CD8-positive, alpha-beta T cell (primary cell): ENCODE measurements at regions of chr3 and their contacts with region 1.

Region 1: DNA sequence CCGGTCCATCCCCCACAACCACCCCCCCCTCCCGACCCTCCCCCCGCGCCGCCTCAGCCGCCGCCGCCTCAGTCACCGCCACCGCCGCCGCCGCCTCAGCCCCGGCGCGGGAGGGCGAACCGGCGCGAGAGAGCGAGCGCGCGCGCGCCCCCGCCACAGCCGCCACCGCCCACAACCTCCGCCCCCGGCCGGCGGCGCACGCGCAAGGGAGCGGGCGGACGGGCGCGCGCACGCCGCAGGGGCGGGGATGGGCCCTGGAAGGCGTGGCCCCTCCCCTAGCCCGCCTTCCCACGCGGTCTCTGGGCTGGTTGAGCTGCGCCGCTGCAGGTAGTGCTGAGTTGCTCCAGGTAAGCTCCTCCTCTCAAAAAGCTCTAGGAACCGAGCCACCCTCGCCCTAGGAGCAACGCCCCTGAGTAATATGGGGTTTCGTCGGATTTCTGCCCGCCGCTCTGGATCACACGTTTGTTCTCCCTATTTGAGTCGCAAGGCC is at the start of gene TMCC1:
- DNase-seq: peak; percentile 72 to 96 (median 90)
- ATAC-seq: peak; percentile 94
- H3K4me3 ChIP-seq: peak within 1 kb of the TSS; percentile 91 to 97
- H3K4me3 Mint-ChIP-seq: peak within 1 kb of the TSS; percentile 90
- H3K27ac ChIP-seq: peak within 1 kb of the TSS; percentile 91 to 93
- H3K27ac Mint-ChIP-seq: peak within 1 kb of the TSS; percentile 93
- H3K4me1 ChIP-seq: peaks cover 39% of the 10 kb centered on the region
- H3K4me1 Mint-ChIP-seq: peaks cover 43% of the 10 kb centered on the region
- H3K27me3 ChIP-seq: no peaks in the 10 kb centered on the region
- H3K27me3 Mint-ChIP-seq: no peaks in the 10 kb centered on the region
- CTCF ChIP-seq: no peak
- total RNA-seq, gene TMCC1: 30.0 to 33.1 TPM

Region 2: GRCh38 chr3:128051837-128052594 is 1841.6 kb before region 1 on chr3 and contains the start of gene SEC61A1:
- CTCF ChIA-PET with region 1: no interaction called
- POLR2A ChIA-PET with region 1: no interaction called
- intact Hi-C with region 1: loop called in 1 of 2 experiments (anchors 5 kb)
- DNase-seq: peak; percentile 87 to 97 (median 95)
- ATAC-seq: peak; percentile 93
- H3K4me3 ChIP-seq: peak within 1 kb of the TSS; percentile 92 to 95
- H3K4me3 Mint-ChIP-seq: peak within 1 kb of the TSS; percentile 99
- H3K27ac ChIP-seq: peak within 1 kb of the TSS; percentile 78 to 85
- H3K27ac Mint-ChIP-seq: peak within 1 kb of the TSS; percentile 98
- H3K4me1 ChIP-seq: peaks cover 35% of the 10 kb centered on the region
- H3K4me1 Mint-ChIP-seq: peaks cover 43% of the 10 kb centered on the region
- H3K27me3 ChIP-seq: no peaks in the 10 kb centered on the region
- H3K27me3 Mint-ChIP-seq: no peaks in the 10 kb centered on the region
- CTCF ChIP-seq: no peak
- total RNA-seq, gene SEC61A1: 125 to 131 TPM

Region 3: GRCh38 chr3:129399145-129399894 is 494.3 kb before region 1 on chr3:
- CTCF ChIA-PET with region 1: interaction called, 3 read pairs
- POLR2A ChIA-PET with region 1: no interaction called
- intact Hi-C with region 1: loop called in 1 of 2 experiments (anchors 5 kb)
- DNase-seq: peak; percentile 40 to 96 (median 73)
- ATAC-seq: peak; percentile 83
- H3K4me3 ChIP-seq: peak overlapping the region; percentile 63 to 72
- H3K4me3 Mint-ChIP-seq: peak overlapping the region; percentile 98
- H3K27ac ChIP-seq: peak overlapping the region; percentile 73 to 88
- H3K27ac Mint-ChIP-seq: peak overlapping the region; percentile 99
- H3K4me1 ChIP-seq: peaks cover 12% of the 10 kb centered on the region
- H3K4me1 Mint-ChIP-seq: peaks cover 42% of the 10 kb centered on the region
- H3K27me3 ChIP-seq: no peaks in the 10 kb centered on the region
- H3K27me3 Mint-ChIP-seq: no peaks in the 10 kb centered on the region
- CTCF ChIP-seq: peak; percentile 78

Region 4: DNA sequence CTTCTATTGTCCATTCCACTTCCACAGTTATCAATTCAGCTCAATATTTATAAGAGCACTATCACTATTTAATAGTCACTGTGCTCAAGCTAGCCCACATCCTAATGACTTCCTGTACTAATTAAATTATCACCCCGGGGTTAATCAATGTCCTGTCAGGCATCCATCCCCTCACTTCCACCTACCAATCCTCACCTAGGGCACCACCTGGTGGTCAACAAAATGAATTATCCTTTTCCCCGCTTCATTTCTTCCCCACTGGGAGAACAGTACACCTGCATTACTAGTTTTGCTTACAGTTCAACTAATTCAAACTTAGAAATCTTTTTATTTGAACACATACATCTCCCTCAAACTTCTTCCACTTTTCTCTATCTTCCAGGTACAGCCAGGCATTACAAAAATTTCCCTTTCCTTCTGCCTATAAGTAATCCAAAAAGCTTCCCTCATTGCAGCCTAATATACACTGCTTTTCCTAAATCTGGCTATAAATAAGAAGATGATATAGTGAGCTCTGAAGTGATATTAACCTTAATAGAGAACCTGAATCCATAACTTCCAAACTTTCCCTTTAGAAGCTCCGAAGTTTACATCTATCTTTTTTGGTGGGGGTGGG is 68.6 kb before region 1 on chr3:
- CTCF ChIA-PET with region 1: no interaction called
- POLR2A ChIA-PET with region 1: interaction called, 3 read pairs
- intact Hi-C with region 1: loop called (anchors 5 kb)
- DNase-seq: peak in 7 of 9 experiments; percentile 11 to 76 (median 47)
- ATAC-seq: peak; percentile 63
- H3K4me3 ChIP-seq: no peak overlapping the region
- H3K4me3 Mint-ChIP-seq: no peak overlapping the region
- H3K27ac ChIP-seq: no peak overlapping the region
- H3K27ac Mint-ChIP-seq: no peak overlapping the region
- H3K4me1 ChIP-seq: peaks cover 10% of the 10 kb centered on the region
- H3K4me1 Mint-ChIP-seq: peaks cover 27% of the 10 kb centered on the region
- H3K27me3 ChIP-seq: no peaks in the 10 kb centered on the region
- H3K27me3 Mint-ChIP-seq: no peaks in the 10 kb centered on the region
- CTCF ChIP-seq: peak; percentile 72

Region 5: DNA sequence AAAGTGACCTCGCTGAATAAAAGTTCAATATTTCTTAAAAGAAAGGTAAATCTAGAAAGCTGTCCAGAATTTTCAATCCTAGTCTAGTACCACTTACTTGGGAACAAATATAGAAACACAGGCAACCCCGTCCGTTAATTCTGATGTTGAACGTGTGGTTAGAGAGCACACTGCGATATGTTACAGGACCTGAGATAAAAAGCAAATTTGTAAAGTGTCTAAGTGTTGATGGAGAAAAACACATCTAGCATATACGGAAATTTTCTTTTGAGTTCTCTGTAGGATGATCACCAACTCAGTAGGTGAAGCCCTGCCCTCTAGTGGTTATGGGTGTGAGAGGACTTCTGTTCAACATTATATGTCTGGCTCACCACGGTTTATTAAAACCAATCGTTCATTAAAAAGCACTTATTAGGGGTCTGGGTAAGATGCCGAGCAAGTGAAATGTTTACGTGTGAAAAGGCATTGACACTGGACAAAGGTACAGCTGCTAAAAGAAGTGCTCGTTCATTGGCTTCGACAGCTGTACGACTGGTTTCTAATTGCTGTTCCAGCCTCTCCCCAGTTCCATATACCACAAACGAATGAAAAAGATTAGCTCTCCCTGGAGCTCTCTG is 999.2 kb after region 1 on chr3:
- CTCF ChIA-PET with region 1: no interaction called
- POLR2A ChIA-PET with region 1: no interaction called
- intact Hi-C with region 1: loop called (anchors 2 to 10 kb)
- DNase-seq: peak; percentile 21 to 89 (median 61)
- ATAC-seq: peak; percentile 63
- H3K4me3 ChIP-seq: peak overlapping the region; percentile 68 to 80
- H3K4me3 Mint-ChIP-seq: peak overlapping the region; percentile 98
- H3K27ac ChIP-seq: peak overlapping the region; percentile 86 to 87
- H3K27ac Mint-ChIP-seq: peak overlapping the region; percentile 99
- H3K4me1 ChIP-seq: peaks cover 27% of the 10 kb centered on the region
- H3K4me1 Mint-ChIP-seq: peaks cover 33% of the 10 kb centered on the region
- H3K27me3 ChIP-seq: no peaks in the 10 kb centered on the region
- H3K27me3 Mint-ChIP-seq: no peaks in the 10 kb centered on the region
- CTCF ChIP-seq: peak; percentile 87